Activated CD4-positive, alpha-beta T cell treated with anti-CD3 and anti-CD28 coated beads, Interleukin-2, amount 10 ng/mL, durations not matched to agents 24 days and 14 days (primary cell): ENCODE measurements at regions of chr12 and their contacts with region 1.

Region 1: DNA sequence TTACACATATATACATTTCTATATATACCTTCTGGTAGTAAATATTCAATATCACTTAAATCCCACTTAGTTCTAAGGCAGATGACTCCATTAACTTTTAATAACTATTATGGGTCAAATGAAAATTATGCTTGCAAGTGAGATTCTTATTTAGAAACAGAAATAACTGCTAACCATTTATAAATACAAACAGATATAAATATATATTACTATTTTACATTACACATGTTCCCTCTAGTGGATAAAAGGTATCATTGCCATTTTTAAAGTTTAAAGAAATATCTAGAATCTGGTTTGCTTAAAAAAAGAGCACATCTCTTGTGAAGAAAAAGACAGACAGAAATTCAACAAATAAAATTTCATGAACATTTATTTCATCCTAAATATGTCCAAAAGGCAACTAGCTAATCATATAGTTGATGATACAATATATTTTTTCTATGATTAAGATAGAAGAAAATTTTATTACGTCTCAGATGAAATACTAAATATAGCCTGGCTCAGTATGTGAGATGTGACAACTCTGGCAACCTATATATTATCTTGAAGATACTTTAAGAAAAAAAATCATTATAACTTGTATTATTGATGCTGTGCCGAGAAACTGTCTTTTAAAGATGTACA is 11.7 kb upstream of the RAD51AP1 start:
- DNase-seq: no peak
- H3K4me3 Mint-ChIP-seq: no peak overlapping the region
- H3K27ac Mint-ChIP-seq: no peak overlapping the region
- H3K4me1 Mint-ChIP-seq: peaks cover 5% of the 10 kb centered on the region
- H3K27me3 Mint-ChIP-seq: no peaks in the 10 kb centered on the region

Region 2: GRCh38 chr12:3998968-3999826 is 527.8 kb before region 1 on chr12:
- intact Hi-C with region 1: loop called (anchors 5 kb)
- DNase-seq: no peak
- H3K4me3 Mint-ChIP-seq: no peak overlapping the region
- H3K27ac Mint-ChIP-seq: no peak overlapping the region
- H3K4me1 Mint-ChIP-seq: peaks cover 5% of the 10 kb centered on the region
- H3K27me3 Mint-ChIP-seq: peaks cover 3% of the 10 kb centered on the region

Region 3: DNA sequence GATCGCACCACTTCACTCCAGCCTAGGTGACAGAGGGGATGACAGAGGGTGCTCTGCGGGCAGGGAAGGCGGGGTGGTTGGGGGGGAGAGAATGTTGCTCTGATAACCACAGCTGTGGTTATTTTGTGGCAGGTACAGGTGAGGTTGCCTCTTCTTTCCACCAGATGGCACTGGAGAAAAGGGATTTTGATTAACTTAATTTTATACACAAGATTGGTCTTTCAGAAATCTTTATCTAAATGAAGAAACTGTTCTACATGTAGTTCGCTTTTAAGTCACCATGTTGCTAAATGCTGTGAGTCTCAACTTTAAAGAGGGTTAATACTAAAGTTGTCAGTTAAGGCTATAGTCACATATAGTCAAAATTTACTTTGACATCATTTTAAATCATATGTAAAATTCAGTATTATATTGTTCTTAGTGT is 173.2 kb before region 1 on chr12:
- intact Hi-C with region 1: loop called (anchors 2 kb)
- DNase-seq: peak; percentile 76
- H3K4me3 Mint-ChIP-seq: no peak overlapping the region
- H3K27ac Mint-ChIP-seq: no peak overlapping the region
- H3K4me1 Mint-ChIP-seq: peaks cover 8% of the 10 kb centered on the region
- H3K27me3 Mint-ChIP-seq: no peaks in the 10 kb centered on the region

Region 4: GRCh38 chr12:4421590-4422031 is 105.4 kb before region 1 on chr12:
- intact Hi-C with region 1: loop called (anchors 1 kb)
- DNase-seq: peak; percentile 79
- H3K4me3 Mint-ChIP-seq: no peak overlapping the region
- H3K27ac Mint-ChIP-seq: no peak overlapping the region
- H3K4me1 Mint-ChIP-seq: peaks cover 9% of the 10 kb centered on the region
- H3K27me3 Mint-ChIP-seq: peaks cover 6% of the 10 kb centered on the region